Sciatic nerve (tissue), 2 donors: ENCODE measurements at regions of chr1 and their contacts with region 1.

Region 1: GRCh38 chr1:218439541-218440295 is 94.6 kb downstream of the TGFB2 start:
- DNase-seq: no peak
- ATAC-seq: peak; percentile 87

Region 2: DNA sequence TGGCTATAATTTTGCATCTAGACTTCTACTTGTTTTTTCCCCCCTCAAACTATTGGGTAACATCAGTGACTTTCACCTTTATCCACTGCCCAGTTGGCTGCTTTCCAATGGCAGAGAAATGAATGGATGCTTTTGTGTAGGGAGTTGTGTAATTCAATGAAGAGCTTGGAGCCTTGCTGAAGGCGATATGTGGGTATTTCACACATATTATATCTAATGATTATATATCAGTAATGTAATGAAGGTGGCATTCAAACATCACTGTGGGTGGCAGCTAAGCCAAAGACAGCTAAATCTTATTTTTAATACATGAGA is 13.4 kb before region 1 on chr1:
- intact Hi-C with region 1: no loop called
- DNase-seq: peak; percentile 73
- ATAC-seq: peak; percentile 94

Region 3: DNA sequence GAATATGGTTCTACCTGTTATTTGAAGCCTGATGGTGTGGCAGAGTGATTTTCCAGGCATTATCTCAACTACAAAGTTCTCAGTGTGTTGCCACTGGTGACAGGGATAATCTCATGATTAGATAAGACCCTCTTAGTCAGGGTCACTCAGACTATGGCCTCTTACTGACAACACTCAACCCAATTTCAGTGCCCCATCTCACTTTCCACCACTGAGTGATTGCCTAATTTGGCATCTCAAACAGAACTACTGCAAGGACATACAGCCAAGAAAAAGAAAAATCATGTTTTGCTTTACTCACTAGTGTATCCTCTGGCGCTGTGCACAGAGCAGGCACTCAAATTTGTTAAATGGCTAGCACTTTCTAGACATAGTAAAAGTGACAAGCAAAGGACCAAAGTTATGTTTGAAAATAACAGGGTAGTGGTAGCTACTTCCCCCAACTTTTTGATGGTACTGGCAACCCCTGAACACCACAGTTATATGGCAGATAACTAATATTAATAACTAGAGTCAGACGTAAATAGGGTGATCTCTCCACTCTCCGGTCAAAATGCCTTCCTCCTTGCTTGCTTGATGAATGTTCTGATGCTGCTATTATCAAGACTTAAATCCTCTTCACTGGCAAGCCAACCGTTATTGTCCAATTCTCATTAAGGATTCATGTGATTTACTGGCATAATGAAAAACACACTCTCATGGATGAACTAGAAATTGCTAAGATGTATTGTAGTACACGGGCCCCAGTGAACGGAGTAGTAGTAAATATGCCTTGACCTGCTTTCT is 1525.8 kb after region 1 on chr1:
- intact Hi-C with region 1: loop called (anchors 5 kb)
- DNase-seq: no peak
- ATAC-seq: peak; percentile 34